ENCODE measurements at regions of chr11 and their contacts with region 1.

Region 1: DNA sequence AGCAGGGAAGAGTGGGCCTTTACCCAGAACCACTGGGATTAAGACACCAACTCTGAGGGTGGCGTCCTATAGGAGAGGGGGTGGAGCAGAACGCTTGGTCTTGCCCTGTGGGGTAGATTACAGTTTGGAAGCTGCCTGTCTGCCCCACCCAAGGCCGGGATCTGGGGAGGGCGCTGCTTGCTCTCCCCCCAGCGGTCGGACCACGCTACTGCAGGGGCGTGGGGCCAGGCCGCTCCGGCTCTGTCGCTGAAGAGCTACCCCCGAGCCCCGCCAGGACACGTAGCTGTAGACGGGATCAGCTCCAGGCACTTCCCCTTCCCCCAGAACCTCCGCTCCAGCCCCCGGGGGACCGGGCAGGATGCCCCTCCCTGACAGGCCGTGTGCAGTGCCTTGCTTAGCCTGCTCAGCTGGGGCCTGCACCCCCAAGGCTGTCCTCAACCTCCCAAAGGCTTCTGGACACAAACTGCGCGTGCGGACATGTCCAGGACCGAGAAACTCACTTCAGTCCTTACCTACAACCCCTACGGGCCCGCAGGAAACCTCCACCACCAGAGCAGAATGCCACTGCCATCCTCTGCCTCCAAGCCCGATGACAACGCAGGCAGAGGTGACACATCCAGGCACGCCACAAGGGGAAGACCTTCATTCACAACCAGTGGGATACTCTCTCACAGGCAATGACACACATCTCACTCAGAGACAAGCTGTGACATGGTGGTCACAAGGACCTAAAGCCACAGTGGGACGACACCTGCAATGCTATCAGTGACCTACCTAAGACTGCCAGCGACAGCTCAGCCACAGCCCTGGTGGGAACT is 3.6 kb downstream of the AHNAK start:
- DNase-seq: peak; percentile 86 to 88
- ATAC-seq: peak; percentile 26 to 70 (median 44)
- H3K4me3 ChIP-seq: peak overlapping the region; percentile 72 to 100 (median 99)
- H3K27ac ChIP-seq: peak overlapping the region; percentile 98 to 100 (median 100)
- H3K4me1 ChIP-seq: peaks cover 52 to 82% (median 74%) of the 10 kb centered on the region in 9 donors
- H3K27me3 ChIP-seq: peaks cover 0 to 6% (median 0%) of the 10 kb centered on the region in 7 donors
- CTCF ChIP-seq: peak; percentile 30 to 100 (median 100)

Region 2: GRCh38 chr11:62402226-62402959 is 140.6 kb before region 1 on chr11:
- intact Hi-C with region 1: loop called in 4 of 10 experiments (anchors 2 to 10 kb)
- DNase-seq: peak; percentile 61 to 64
- ATAC-seq: peak; percentile 37 to 68 (median 56)
- H3K4me3 ChIP-seq: peak overlapping the region in 4 of 10 donors; percentile 2 to 15 (median 10)
- H3K27ac ChIP-seq: peak overlapping the region in 8 of 10 donors; percentile 32 to 86 (median 74)
- H3K4me1 ChIP-seq: peaks cover 35 to 67% (median 56%) of the 10 kb centered on the region in 9 donors
- H3K27me3 ChIP-seq: no peaks in the 10 kb centered on the region
- CTCF ChIP-seq: no peak

Region 3: GRCh38 chr11:62427630-62428233 is 115.2 kb before region 1 on chr11:
- intact Hi-C with region 1: loop called (anchors 1 to 5 kb)
- DNase-seq: no peak
- ATAC-seq: no peak
- H3K4me3 ChIP-seq: no peak overlapping the region
- H3K27ac ChIP-seq: peak overlapping the region in 1 of 10 donors; percentile 72
- H3K4me1 ChIP-seq: peaks cover 0 to 75% (median 9%) of the 10 kb centered on the region in 9 donors
- H3K27me3 ChIP-seq: no peaks in the 10 kb centered on the region
- CTCF ChIP-seq: no peak

Region 4: GRCh38 chr11:62497132-62497915 is 45.6 kb before region 1 on chr11:
- intact Hi-C with region 1: loop called in 3 of 10 experiments (anchors 1 to 5 kb)
- DNase-seq: no peak
- ATAC-seq: peak in 3 of 8 donors; percentile 32 to 48 (median 39)
- H3K4me3 ChIP-seq: no peak overlapping the region
- H3K27ac ChIP-seq: no peak overlapping the region
- H3K4me1 ChIP-seq: peaks cover 1 to 53% (median 33%) of the 10 kb centered on the region in 9 donors
- H3K27me3 ChIP-seq: no peaks in the 10 kb centered on the region
- CTCF ChIP-seq: peak in 7 of 9 donors; percentile 27 to 55 (median 50)

Region 5: GRCh38 chr11:62556108-62556871 is 13.3 kb after region 1 on chr11:
- intact Hi-C with region 1: loop called in 3 of 10 experiments (anchors 2 kb)
- DNase-seq: peak; percentile 84 to 88
- ATAC-seq: peak; percentile 58 to 73 (median 68)
- H3K4me3 ChIP-seq: peak overlapping the region in 3 of 10 donors; percentile 7 to 30 (median 13)
- H3K27ac ChIP-seq: peak overlapping the region; percentile 61 to 98 (median 92)
- H3K4me1 ChIP-seq: peaks cover 41 to 95% (median 80%) of the 10 kb centered on the region in 9 donors
- H3K27me3 ChIP-seq: no peaks in the 10 kb centered on the region
- CTCF ChIP-seq: no peak

Region 6: DNA sequence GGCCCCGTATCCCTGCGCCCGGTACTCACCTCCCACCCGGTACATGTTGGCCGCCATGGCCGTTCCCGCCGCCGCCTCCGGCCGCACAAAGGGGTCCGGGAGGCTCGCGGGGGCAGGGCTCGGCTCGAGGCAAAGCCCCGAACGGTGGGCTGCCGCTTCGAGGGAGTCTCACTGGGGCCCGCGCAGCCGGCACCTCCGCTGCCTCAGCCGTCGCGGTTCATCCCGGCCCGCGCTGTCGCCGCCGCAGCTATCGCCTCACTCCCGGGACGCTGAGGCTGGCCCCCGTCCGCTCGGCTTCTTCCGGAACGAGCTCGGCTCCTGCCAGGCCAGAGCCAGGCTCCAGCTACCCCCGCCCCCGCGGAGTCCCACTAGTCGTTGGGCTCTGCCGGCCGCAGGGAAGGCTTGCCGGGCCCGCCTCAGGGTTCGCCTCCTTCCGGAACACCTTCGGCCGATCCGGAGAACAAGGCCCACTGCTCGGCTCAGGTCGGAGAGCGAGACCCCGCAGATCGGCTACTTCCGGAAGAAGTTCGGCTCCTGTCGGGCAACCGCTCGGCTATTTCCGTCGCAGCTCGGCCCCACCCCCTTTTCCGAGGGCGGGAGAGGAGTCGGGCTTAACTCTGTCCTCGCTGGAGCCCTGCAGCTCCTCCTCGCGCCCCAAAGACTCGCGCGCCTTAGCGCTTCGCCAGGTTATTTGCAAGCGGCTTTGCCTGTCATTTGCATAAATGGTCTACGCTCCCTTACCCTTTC is 58.6 kb after region 1 on chr11 and contains the start of gene MTA2:
- intact Hi-C with region 1: no loop called
- DNase-seq: peak; percentile 98
- ATAC-seq: peak; percentile 88 to 95 (median 90)
- H3K4me3 ChIP-seq: peak within 1 kb of the TSS; percentile 34 to 100 (median 95)
- H3K27ac ChIP-seq: peak within 1 kb of the TSS; percentile 84 to 99 (median 97)
- H3K4me1 ChIP-seq: peaks cover 17 to 48% (median 43%) of the 10 kb centered on the region in 9 donors
- H3K27me3 ChIP-seq: no peaks in the 10 kb centered on the region
- CTCF ChIP-seq: no peak
- total RNA-seq, gene MTA2: 25.0 to 45.3 (median 29.8) TPM